ENCODE measurements at regions of chr1 and their contacts with region 1.

Region 1: DNA sequence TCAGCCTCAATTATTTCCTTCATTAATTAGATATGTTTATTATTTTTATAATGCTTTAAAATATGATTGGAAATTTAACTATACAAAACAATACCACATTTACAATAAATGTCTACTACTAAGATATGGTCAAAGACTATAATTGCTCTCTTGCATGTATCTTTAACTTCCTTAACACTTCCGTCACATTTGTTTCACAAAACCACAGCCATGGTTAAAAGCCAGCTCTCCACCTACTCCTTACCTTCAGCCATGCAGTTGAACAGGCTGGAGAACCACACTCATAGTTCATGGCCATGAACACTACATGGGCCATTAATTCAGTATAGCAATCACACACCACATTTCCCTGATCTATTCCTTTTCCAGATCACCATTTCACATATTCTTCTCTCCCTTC is 72.2 kb downstream of the NME7 start:
- DNase-seq: no peak
- ATAC-seq: no peak
- H3K4me3 ChIP-seq: no peak overlapping the region
- H3K27ac ChIP-seq: no peak overlapping the region
- H3K4me1 ChIP-seq: no peaks in the 10 kb centered on the region
- H3K27me3 ChIP-seq: no peaks in the 10 kb centered on the region
- CTCF ChIP-seq: no peak
- POLR2A ChIP-seq: no peak

Region 2: GRCh38 chr1:169133801-169134502 is 161.5 kb before region 1 on chr1:
- intact Hi-C with region 1: no loop called
- DNase-seq: no peak
- ATAC-seq: peak in 2 of 4 donors; percentile 40 to 47
- H3K4me3 ChIP-seq: no peak overlapping the region
- H3K27ac ChIP-seq: peak overlapping the region in 5 of 12 donors; percentile 10 to 34 (median 15)
- H3K4me1 ChIP-seq: peaks cover 0 to 23% (median 8%) of the 10 kb centered on the region in 12 donors
- H3K27me3 ChIP-seq: no peaks in the 10 kb centered on the region
- CTCF ChIP-seq: peak in 9 of 12 donors; percentile 10 to 64 (median 42)
- POLR2A ChIP-seq: no peak

Region 3: GRCh38 chr1:169207797-169208520 is 87.5 kb before region 1 on chr1:
- intact Hi-C with region 1: no loop called
- DNase-seq: no peak
- ATAC-seq: no peak
- H3K4me3 ChIP-seq: no peak overlapping the region
- H3K27ac ChIP-seq: peak overlapping the region in 1 of 12 donors; percentile 11
- H3K4me1 ChIP-seq: no peaks in the 10 kb centered on the region
- H3K27me3 ChIP-seq: no peaks in the 10 kb centered on the region
- CTCF ChIP-seq: no peak
- POLR2A ChIP-seq: no peak

Region 4: DNA sequence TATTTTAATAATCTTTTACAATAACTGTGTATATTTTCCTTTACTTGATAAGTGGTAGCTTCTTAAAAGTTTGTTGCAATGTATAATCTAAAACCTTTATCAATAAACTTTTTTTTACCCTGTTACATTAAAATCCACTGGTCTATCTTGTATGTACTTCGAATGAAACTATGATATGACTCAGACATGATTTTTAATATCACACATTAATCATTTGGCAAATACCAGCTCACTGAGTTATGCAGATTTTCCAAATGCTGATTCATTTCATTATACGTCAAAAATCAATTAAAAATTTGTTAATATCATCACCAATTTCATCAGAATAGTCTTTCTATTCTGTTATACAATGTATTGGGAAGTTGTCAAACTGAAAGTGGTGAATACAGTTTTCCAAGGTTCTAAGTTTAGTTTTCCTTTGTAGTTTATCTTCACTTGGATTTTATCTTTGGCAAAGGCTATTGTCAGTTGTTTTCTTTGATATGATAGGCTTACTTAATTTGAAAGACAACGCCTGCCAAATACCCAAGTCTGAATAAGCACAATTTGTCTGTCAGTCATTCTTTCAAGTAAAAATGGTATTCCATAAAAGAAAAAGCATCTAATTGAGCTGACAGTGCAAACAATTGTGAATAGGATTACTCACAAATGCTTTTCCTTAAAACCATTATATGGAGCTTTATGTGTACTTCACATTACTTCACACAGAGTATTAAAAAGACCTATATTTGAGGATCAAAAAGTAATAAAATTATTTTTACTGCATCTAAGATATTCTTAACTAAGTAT is 54.8 kb before region 1 on chr1:
- intact Hi-C with region 1: loop called in 1 of 10 experiments (anchors 10 kb)
- DNase-seq: no peak
- ATAC-seq: no peak
- H3K4me3 ChIP-seq: no peak overlapping the region
- H3K27ac ChIP-seq: no peak overlapping the region
- H3K4me1 ChIP-seq: peaks cover 4 to 41% (median 10%) of the 10 kb centered on the region in 12 donors
- H3K27me3 ChIP-seq: no peaks in the 10 kb centered on the region
- CTCF ChIP-seq: no peak
- POLR2A ChIP-seq: no peak

Region 5: GRCh38 chr1:169348383-169349036 is 53.1 kb after region 1 on chr1:
- intact Hi-C with region 1: no loop called
- DNase-seq: peak in 1 of 5 donors; percentile 11
- ATAC-seq: peak in 2 of 4 donors; percentile 34 to 42
- H3K4me3 ChIP-seq: no peak overlapping the region
- H3K27ac ChIP-seq: no peak overlapping the region
- H3K4me1 ChIP-seq: no peaks in the 10 kb centered on the region
- H3K27me3 ChIP-seq: no peaks in the 10 kb centered on the region
- CTCF ChIP-seq: peak; percentile 73 to 88 (median 82)
- POLR2A ChIP-seq: no peak

Measured in heart left ventricle (tissue), 16 donors.